ENCODE measurements at regions of chr15 and their contacts with region 1.

Region 1: GRCh38 chr15:96234109-96234892 is 96.2 kb upstream of the NR2F2 start:
- DNase-seq: peak; percentile 58
- ATAC-seq: peak; percentile 92
- H3K4me3 ChIP-seq: no peak overlapping the region
- H3K27ac ChIP-seq: peak overlapping the region; percentile 57
- H3K4me1 ChIP-seq: peaks cover 10% of the 10 kb centered on the region
- H3K27me3 ChIP-seq: no peaks in the 10 kb centered on the region
- CTCF ChIP-seq: no peak
- EP300 ChIP-seq: peak; percentile 64 to 95; a peak in 3 of 4 replicates
- POLR2A ChIP-seq: no peak
- RAD21 ChIP-seq: no peak

Region 2: GRCh38 chr15:95734422-95735316 is 499.6 kb before region 1 on chr15:
- CTCF ChIA-PET with region 1: no interaction called
- POLR2A ChIA-PET with region 1: no interaction called
- RAD21 ChIA-PET with region 1: no interaction called
- SMC1A ChIA-PET with region 1: no interaction called
- in situ Hi-C with region 1: no loop called
- intact Hi-C with region 1: no loop called
- DNase-seq: no peak
- ATAC-seq: no peak; the same call in 2 of the 3 replicates
- H3K4me3 ChIP-seq: no peak overlapping the region
- H3K27ac ChIP-seq: no peak overlapping the region
- H3K4me1 ChIP-seq: no peaks in the 10 kb centered on the region; the same call in 1 of the 2 replicates
- H3K27me3 ChIP-seq: no peaks in the 10 kb centered on the region
- CTCF ChIP-seq: no peak
- EP300 ChIP-seq: no peak
- POLR2A ChIP-seq: no peak
- RAD21 ChIP-seq: no peak

Region 3: GRCh38 chr15:95988351-95988805 is 245.9 kb before region 1 on chr15:
- CTCF ChIA-PET with region 1: no interaction called
- POLR2A ChIA-PET with region 1: no interaction called
- RAD21 ChIA-PET with region 1: interaction called, 3 read pairs
- SMC1A ChIA-PET with region 1: no interaction called
- in situ Hi-C with region 1: no loop called
- intact Hi-C with region 1: loop called (anchors 5 kb)
- DNase-seq: no peak
- ATAC-seq: peak; percentile 57
- H3K4me3 ChIP-seq: no peak overlapping the region
- H3K27ac ChIP-seq: no peak overlapping the region
- H3K4me1 ChIP-seq: peaks cover 16% of the 10 kb centered on the region
- H3K27me3 ChIP-seq: no peaks in the 10 kb centered on the region
- CTCF ChIP-seq: no peak
- EP300 ChIP-seq: no peak
- POLR2A ChIP-seq: no peak
- RAD21 ChIP-seq: no peak

Region 4: GRCh38 chr15:96058103-96058851 is 176.0 kb before region 1 on chr15:
- CTCF ChIA-PET with region 1: no interaction called
- POLR2A ChIA-PET with region 1: interaction called, 6 read pairs
- RAD21 ChIA-PET with region 1: no interaction called
- SMC1A ChIA-PET with region 1: no interaction called
- in situ Hi-C with region 1: no loop called
- intact Hi-C with region 1: loop called (anchors 5 kb)
- DNase-seq: peak; percentile 89
- ATAC-seq: peak; percentile 93
- H3K4me3 ChIP-seq: no peak overlapping the region
- H3K27ac ChIP-seq: peak overlapping the region; percentile 88
- H3K4me1 ChIP-seq: peaks cover 26% of the 10 kb centered on the region
- H3K27me3 ChIP-seq: no peaks in the 10 kb centered on the region
- CTCF ChIP-seq: no peak
- EP300 ChIP-seq: peak; percentile 85 to 87; a peak in 2 of 4 replicates
- POLR2A ChIP-seq: no peak
- RAD21 ChIP-seq: 0 out of 2 replicates have a peak, but pooled peaks have one; percentile 3

Region 5: DNA sequence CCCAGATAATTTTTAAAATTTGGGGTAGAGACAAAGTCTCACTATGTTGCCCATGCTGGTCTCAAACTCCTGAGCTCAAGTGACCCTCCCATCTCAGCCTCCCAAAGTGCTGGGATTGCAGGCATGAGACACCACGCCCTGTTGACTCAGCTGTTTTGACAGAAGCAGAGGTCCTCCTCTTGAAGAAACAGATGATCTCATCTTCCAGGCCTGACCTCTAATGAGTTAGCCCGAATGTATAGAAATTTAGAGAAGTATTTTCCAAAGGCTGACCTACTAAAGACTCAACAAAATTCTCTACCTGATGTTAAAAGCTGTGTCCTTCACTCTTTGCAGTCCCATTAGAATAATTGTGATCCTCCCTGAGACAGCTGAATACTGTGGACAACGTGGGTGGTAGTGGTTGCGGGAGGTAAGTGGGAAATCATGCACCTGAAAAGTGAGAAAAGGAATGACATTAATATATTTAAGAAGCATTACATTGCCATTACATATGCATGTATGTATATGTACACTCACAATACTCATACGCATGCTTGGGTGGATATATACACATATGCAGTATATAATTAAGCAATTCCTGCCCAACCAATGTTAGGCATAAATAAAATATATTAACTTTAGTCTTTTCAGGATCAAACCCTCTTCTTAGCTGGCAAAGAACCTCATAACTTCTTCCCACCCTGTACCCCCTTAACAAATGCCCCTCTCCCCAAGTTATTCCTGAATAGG is 108.5 kb before region 1 on chr15:
- CTCF ChIA-PET with region 1: no interaction called
- POLR2A ChIA-PET with region 1: no interaction called
- RAD21 ChIA-PET with region 1: no interaction called
- SMC1A ChIA-PET with region 1: interaction called, 4 read pairs
- in situ Hi-C with region 1: no loop called
- intact Hi-C with region 1: loop called (anchors 5 kb)
- DNase-seq: no peak
- ATAC-seq: no peak
- H3K4me3 ChIP-seq: no peak overlapping the region
- H3K27ac ChIP-seq: no peak overlapping the region
- H3K4me1 ChIP-seq: peaks cover 12% of the 10 kb centered on the region
- H3K27me3 ChIP-seq: no peaks in the 10 kb centered on the region
- CTCF ChIP-seq: no peak
- EP300 ChIP-seq: no peak
- POLR2A ChIP-seq: no peak
- RAD21 ChIP-seq: no peak

Measured in GM12878 (cell line).